ENCODE measurements at regions of chr1 and their contacts with region 1.

Region 1: GRCh38 chr1:16243936-16244649 is 7.1 kb upstream of the CPLANE2 start:
- DNase-seq: peak; percentile 82
- H3K4me3 ChIP-seq: no peak overlapping the region
- H3K27ac ChIP-seq: peak overlapping the region in 1 of 2 donors; percentile 31
- H3K4me1 ChIP-seq: peaks cover 13% of the 10 kb centered on the region
- H3K27me3 ChIP-seq: no peaks in the 10 kb centered on the region
- CTCF ChIP-seq: peak; percentile 53 to 92 (median 80)
- POLR2A ChIP-seq: no peak

Region 2: DNA sequence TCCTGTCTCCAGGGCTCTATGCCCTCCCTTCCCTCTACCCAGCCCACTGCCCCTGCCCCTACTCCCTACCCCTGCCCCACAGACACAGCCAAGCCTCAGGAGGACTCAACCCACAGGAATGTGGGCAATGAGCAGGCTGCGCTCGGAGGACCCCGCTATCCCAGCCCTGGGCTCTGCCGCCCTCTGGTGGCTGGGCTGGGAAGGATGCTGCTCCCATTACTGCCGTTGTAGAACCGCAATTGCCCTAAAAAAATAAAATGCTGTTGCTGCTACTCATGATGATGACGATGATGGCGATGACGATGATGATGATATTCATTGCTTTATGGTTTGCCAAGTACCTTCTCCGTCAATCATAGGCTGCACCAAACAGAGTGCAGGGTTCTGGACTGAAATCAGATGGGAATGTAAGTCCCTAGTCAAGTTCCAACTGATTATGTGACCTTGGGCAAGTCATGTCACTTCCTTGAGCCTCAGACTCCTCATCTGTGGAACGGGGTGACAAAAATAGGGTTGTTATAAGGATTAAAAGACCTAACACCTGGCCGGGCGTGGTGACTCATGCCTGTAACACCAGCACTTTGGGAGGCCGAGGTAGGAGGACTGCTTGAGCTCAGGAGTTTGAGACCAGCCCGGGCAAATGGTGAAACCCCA is 56.2 kb before region 1 on chr1:
- intact Hi-C with region 1: loop called (anchors 5 kb)
- DNase-seq: peak; percentile 59
- H3K4me3 ChIP-seq: no peak overlapping the region
- H3K27ac ChIP-seq: no peak overlapping the region
- H3K4me1 ChIP-seq: no peaks in the 10 kb centered on the region
- H3K27me3 ChIP-seq: no peaks in the 10 kb centered on the region
- CTCF ChIP-seq: peak; percentile 98
- POLR2A ChIP-seq: no peak

Region 3: DNA sequence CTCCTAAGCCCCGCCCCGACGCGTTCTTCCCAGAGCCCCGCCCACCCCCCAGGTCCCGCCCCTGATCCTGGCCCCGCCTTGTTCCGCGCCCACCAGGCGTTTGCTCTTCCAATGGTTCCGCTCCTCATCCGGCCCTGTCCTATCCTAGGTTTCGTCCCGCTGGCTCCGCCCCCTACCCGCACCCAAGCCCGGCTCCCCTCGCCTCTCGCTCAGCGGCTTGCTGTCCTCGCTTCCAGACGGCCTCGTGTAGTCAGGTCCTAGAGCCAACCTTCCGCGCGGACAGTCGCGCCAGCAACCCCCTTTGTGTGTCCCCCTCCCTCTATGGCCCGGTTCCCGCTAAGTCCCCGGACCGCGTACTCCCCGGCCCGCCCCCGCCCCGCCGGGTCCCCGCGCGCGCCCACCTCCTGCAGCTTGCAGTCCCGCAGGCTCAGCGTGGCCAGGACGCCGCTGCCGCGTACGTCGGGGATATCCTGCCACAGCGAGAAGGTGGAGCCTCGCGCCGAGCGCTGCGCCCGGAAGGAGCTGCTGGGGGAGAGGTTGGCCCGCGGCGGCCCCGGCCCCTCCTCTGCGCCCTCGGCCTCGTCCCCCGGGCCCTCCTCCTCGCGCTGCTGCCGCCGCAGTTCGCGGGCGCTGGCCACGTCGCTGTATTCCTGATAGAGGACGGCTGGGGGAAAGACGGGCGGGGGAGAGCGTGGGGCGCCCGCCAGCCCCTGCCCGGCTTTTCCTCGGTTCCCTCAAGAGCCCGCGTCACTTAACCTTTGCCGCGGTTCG is 37.4 kb before region 1 on chr1:
- intact Hi-C with region 1: loop called (anchors 5 kb)
- DNase-seq: peak; percentile 98
- H3K4me3 ChIP-seq: peak overlapping the region; percentile 47
- H3K27ac ChIP-seq: peak overlapping the region; percentile 86 to 87
- H3K4me1 ChIP-seq: no peaks in the 10 kb centered on the region
- H3K27me3 ChIP-seq: no peaks in the 10 kb centered on the region
- CTCF ChIP-seq: no peak
- POLR2A ChIP-seq: peak; percentile 84

Region 4: DNA sequence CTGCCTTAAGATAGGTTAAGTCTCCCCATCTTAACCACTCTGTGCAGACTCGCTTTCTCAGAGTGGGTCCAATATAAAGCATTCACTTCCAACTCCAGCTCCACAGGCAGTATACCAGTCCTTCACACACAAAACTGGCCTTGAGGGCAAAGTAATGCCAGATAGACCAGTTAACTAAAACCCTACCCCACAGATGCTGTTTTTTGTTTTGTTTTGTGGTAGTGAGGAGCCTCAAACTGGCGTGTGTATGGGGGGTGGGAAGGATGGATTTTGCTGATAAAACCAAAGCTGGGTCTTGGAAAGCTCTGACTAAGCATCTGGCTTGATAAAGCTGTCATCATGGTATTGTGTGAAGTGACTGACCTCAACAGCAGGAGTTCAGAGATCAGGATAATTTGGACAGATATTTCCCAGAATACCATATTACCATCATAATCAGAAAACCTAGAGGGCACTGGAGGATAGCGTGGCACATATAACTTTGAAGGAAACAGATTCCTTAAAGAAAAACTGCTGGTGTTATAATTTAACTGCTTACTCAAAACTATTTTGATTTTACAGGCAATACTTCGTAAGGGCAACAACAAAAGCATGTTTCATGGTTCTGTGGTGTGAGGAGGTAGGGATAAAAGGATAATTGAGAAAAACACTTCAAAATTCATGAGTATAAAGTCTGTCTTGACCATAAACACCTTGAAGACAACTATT is 22.5 kb after region 1 on chr1:
- intact Hi-C with region 1: no loop called
- DNase-seq: no peak
- H3K4me3 ChIP-seq: no peak overlapping the region
- H3K27ac ChIP-seq: no peak overlapping the region
- H3K4me1 ChIP-seq: peaks cover 4% of the 10 kb centered on the region
- H3K27me3 ChIP-seq: no peaks in the 10 kb centered on the region
- CTCF ChIP-seq: no peak
- POLR2A ChIP-seq: no peak

Region 5: DNA sequence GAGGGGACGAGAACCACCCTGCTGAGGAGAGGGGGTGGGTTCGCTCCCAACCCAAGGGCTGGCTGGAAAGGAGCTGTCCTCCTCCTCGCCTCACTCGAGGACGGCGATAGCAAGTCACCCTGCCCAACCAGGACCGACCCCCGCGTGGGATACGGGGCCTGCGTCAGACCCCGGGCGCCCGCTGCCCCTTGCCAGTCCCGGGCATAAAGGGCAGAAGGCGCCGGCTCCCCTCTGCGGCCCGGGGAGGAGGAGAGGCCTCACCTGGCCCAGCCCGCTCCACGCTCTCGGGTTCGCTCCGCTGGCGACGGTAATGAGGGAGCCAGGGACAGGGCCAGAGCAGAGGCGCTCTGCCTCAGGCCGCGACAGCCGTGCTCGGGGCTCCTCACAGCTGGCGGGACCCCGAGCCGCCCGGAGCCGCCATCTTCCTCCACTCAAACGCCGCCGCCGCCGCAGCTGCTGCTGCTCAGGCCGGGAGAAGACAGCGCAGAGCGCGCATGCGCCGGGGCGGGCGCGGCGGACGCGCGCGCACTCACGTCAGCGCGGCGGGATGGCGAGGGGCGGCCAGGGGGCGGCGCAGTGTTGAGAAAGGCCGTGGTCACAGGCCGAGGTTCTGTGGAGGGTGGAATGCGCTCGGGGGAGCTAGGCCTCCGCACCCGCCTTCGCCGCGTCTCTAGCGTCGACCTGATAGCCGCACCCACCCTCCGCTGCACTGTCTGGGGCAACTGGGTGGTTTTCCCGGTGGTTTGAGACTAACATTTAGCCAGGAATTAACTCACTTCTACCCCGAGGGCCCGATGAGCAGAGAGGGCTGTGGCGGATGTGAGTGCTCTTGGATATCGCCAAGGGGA is 108.1 kb after region 1 on chr1 and contains the start of gene FBXO42:
- intact Hi-C with region 1: loop called (anchors 5 kb)
- DNase-seq: peak; percentile 85
- H3K4me3 ChIP-seq: peak within 1 kb of the TSS; percentile 97 to 99
- H3K27ac ChIP-seq: peak within 1 kb of the TSS; percentile 96 to 98
- H3K4me1 ChIP-seq: peaks cover 3% of the 10 kb centered on the region
- H3K27me3 ChIP-seq: no peaks in the 10 kb centered on the region
- CTCF ChIP-seq: peak in 3 of 4 experiments; percentile 31 to 64 (median 61)
- POLR2A ChIP-seq: peak; percentile 97
- total RNA-seq, gene FBXO42: 26.6 to 52.6 TPM